CD8-positive, alpha-beta memory T cell (primary cell): ENCODE measurements at regions of chr20 and their contacts with region 1.

Region 1: GRCh38 chr20:38446441-38447209 is 11.5 kb upstream of the SNHG17 start:
- DNase-seq: peak; percentile 89 to 94 (median 90)
- H3K4me3 ChIP-seq: peak overlapping the region; percentile 93
- H3K4me3 Mint-ChIP-seq: peak overlapping the region; percentile 80 to 92 (median 85)
- H3K27ac ChIP-seq: peak overlapping the region; percentile 78
- H3K27ac Mint-ChIP-seq: peak overlapping the region; percentile 77 to 91 (median 86)
- H3K4me1 ChIP-seq: peaks cover 15% of the 10 kb centered on the region
- H3K4me1 Mint-ChIP-seq: peaks cover 20 to 28% (median 25%) of the 10 kb centered on the region in 3 donors
- H3K27me3 ChIP-seq: no peaks in the 10 kb centered on the region
- H3K27me3 Mint-ChIP-seq: peaks cover 6 to 9% of the 10 kb centered on the region in 2 donors

Region 2: GRCh38 chr20:38418509-38419204 is 28.0 kb before region 1 on chr20:
- CTCF ChIA-PET with region 1: no interaction called
- POLR2A ChIA-PET with region 1: no interaction called
- DNase-seq: no peak
- H3K4me3 ChIP-seq: no peak overlapping the region
- H3K4me3 Mint-ChIP-seq: no peak overlapping the region
- H3K27ac ChIP-seq: no peak overlapping the region
- H3K27ac Mint-ChIP-seq: peak overlapping the region in 3 of 8 donors; percentile 11 to 73 (median 26)
- H3K4me1 ChIP-seq: no peaks in the 10 kb centered on the region
- H3K4me1 Mint-ChIP-seq: peaks cover 0 to 12% (median 2%) of the 10 kb centered on the region in 3 donors
- H3K27me3 ChIP-seq: no peaks in the 10 kb centered on the region
- H3K27me3 Mint-ChIP-seq: peaks cover 0 to 3% of the 10 kb centered on the region in 2 donors

Region 3: DNA sequence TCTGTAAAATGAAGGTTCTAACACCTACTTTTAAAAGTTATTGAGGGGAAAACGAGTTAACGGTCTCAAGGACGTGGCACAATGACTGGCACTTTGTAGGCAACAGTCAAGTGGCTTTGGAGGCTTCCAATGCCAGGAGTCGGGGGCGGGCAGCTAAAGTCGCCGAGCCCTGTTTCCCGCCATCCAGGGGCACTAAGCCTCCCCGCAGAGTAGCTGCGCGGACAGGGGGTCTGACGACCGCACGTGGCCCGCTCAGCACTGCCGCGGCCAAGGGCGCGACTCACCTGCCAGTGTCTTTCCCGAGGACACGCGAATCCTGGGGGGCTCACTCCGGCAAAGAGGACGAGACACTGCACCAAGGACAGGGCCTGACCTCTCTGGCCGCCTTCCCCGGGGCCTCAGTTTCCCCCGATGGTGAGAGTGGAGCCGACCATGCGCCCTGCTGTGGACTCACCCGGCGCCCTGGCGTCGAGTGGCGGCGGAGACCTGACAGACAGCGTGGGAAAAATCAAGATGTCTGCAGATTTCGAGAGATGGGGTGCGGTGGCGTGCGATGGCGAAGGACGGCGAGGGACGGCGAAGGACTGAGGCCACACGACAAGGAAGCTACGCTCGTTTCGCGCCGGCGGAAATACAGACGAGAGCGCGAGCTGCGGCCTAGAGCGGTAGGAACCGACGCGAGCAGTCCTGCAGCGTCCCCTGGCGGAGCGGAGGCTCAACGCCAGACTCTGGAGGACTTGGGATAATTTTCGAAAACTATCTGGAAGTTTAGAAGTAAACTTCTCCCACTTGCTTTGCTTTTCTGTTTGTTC is 11.7 kb before region 1 on chr20 and contains the start of gene SNHG17:
- CTCF ChIA-PET with region 1: interaction called, 85 read pairs
- POLR2A ChIA-PET with region 1: interaction called, 44 read pairs
- DNase-seq: peak; percentile 83 to 92 (median 85)
- H3K4me3 ChIP-seq: peak within 1 kb of the TSS; percentile 93
- H3K4me3 Mint-ChIP-seq: peak within 1 kb of the TSS; percentile 96 to 99 (median 97)
- H3K27ac ChIP-seq: peak within 1 kb of the TSS; percentile 77
- H3K27ac Mint-ChIP-seq: peak within 1 kb of the TSS; percentile 95 to 99 (median 98)
- H3K4me1 ChIP-seq: peaks cover 26% of the 10 kb centered on the region
- H3K4me1 Mint-ChIP-seq: peaks cover 29 to 47% (median 41%) of the 10 kb centered on the region in 3 donors
- H3K27me3 ChIP-seq: no peaks in the 10 kb centered on the region
- H3K27me3 Mint-ChIP-seq: peaks cover 6 to 12% of the 10 kb centered on the region in 2 donors
- total RNA-seq, gene SNHG17: 211 to 216 TPM